Heart right ventricle (tissue), 16 donors: ENCODE measurements at regions of chr5 and their contacts with region 1.

Region 1: GRCh38 chr5:134533115-134533815 is 7.8 kb downstream of the JADE2 start:
- DNase-seq: peak in 1 of 2 donors; percentile 69
- ATAC-seq: peak; percentile 34 to 76 (median 63)
- H3K4me3 ChIP-seq: no peak overlapping the region
- H3K27ac ChIP-seq: peak overlapping the region in 7 of 10 donors; percentile 15 to 44 (median 28)
- H3K4me1 ChIP-seq: peaks cover 33 to 77% (median 60%) of the 10 kb centered on the region in 9 donors
- H3K27me3 ChIP-seq: no peaks in the 10 kb centered on the region
- CTCF ChIP-seq: no peak

Region 2: GRCh38 chr5:134145779-134146581 is 387.3 kb before region 1 on chr5:
- intact Hi-C with region 1: no loop called
- DNase-seq: peak; percentile 73 to 75
- ATAC-seq: peak; percentile 69 to 91 (median 84)
- H3K4me3 ChIP-seq: no peak overlapping the region
- H3K27ac ChIP-seq: no peak overlapping the region
- H3K4me1 ChIP-seq: peaks cover 4 to 49% (median 24%) of the 10 kb centered on the region in 9 donors
- H3K27me3 ChIP-seq: no peaks in the 10 kb centered on the region
- CTCF ChIP-seq: peak; percentile 92 to 98 (median 95)

Region 3: DNA sequence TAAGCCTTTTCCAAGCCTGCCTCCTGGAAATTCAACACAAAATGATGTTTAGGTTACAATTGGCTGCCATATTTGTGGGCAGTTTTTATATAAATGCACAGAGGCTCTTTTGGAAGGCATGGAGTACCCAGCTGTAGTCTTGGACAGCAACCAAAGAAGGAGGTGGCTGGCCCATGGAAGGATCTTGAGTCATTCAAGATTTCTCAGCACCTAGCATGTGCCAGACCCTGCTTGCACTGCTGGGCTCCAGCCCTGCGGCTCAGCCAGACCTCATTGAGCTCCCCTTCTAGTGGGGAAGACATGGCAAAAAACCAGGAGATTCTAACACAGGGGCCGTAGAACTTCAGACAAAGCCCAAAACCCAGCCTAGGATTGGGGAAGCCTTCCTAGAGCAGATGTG is 14.3 kb after region 1 on chr5:
- intact Hi-C with region 1: loop called in 1 of 10 experiments (anchors 2 kb)
- DNase-seq: no peak
- ATAC-seq: peak in 2 of 8 donors; percentile 38 to 50
- H3K4me3 ChIP-seq: no peak overlapping the region
- H3K27ac ChIP-seq: peak overlapping the region in 5 of 10 donors; percentile 24 to 44 (median 36)
- H3K4me1 ChIP-seq: peaks cover 17 to 98% (median 84%) of the 10 kb centered on the region in 9 donors
- H3K27me3 ChIP-seq: no peaks in the 10 kb centered on the region
- CTCF ChIP-seq: no peak

Region 4: DNA sequence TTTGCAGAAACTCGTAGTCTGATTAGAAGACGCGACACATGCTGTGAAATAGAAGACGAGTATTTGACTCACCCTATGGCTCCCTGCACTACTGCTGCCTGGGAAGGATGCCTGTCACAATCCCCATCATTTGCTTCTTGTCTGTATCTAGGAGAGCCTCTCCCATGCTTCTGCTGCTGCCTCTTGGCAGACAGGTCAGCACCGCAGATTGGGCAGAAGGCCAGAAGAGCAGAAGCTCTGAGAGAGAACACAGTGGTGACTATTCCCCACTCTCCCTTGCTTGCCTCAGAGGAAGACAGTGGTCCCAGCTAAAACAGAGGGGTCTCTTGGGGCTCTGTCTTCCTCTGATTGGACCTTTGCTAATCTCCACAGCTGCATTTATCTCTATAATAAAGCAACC is 1743.7 kb after region 1 on chr5:
- intact Hi-C with region 1: no loop called
- DNase-seq: no peak
- ATAC-seq: no peak
- H3K4me3 ChIP-seq: no peak overlapping the region
- H3K27ac ChIP-seq: no peak overlapping the region
- H3K4me1 ChIP-seq: no peaks in the 10 kb centered on the region
- H3K27me3 ChIP-seq: peaks cover 0 to 18% (median 9%) of the 10 kb centered on the region in 7 donors
- CTCF ChIP-seq: no peak